ENCODE measurements at regions of chr6 and their contacts with region 1.

Region 1: GRCh38 chr6:82363351-82364086 is at the start of gene TPBG:
- DNase-seq: peak; percentile 62
- ATAC-seq: peak; percentile 84
- H3K4me3 ChIP-seq: peak within 1 kb of the TSS; percentile 92 to 97
- H3K27ac ChIP-seq: peak within 1 kb of the TSS; percentile 93
- H3K4me1 ChIP-seq: peaks cover 20% of the 10 kb centered on the region
- H3K27me3 ChIP-seq: peaks cover 2% of the 10 kb centered on the region; the same call in 1 of the 2 replicates
- CTCF ChIP-seq: peak; percentile 20; the same call in 1 of the 2 replicates
- total RNA-seq, gene TPBG: 84.1 TPM

Region 2: GRCh38 chr6:81722506-81723223 is 640.9 kb before region 1 on chr6:
- CTCF ChIA-PET with region 1: no interaction called
- POLR2A ChIA-PET with region 1: no interaction called
- in situ Hi-C with region 1: no loop called
- intact Hi-C with region 1: no loop called
- DNase-seq: no peak
- ATAC-seq: no peak
- H3K4me3 ChIP-seq: no peak overlapping the region
- H3K27ac ChIP-seq: no peak overlapping the region
- H3K4me1 ChIP-seq: no peaks in the 10 kb centered on the region
- H3K27me3 ChIP-seq: no peaks in the 10 kb centered on the region
- CTCF ChIP-seq: no peak

Region 3: GRCh38 chr6:82247634-82248232 is 115.8 kb before region 1 on chr6 and contains the start of gene IBTK:
- CTCF ChIA-PET with region 1: interaction called, 12 read pairs
- POLR2A ChIA-PET with region 1: no interaction called
- in situ Hi-C with region 1: no loop called
- intact Hi-C with region 1: loop called (anchors 5 kb)
- DNase-seq: peak; percentile 85
- ATAC-seq: peak; percentile 92
- H3K4me3 ChIP-seq: peak within 1 kb of the TSS; percentile 65 to 99
- H3K27ac ChIP-seq: peak within 1 kb of the TSS; percentile 99
- H3K4me1 ChIP-seq: peaks cover 34% of the 10 kb centered on the region; the same call in 1 of the 2 replicates
- H3K27me3 ChIP-seq: no peaks in the 10 kb centered on the region
- CTCF ChIP-seq: no peak
- total RNA-seq, gene IBTK: 73.2 TPM

Region 4: GRCh38 chr6:82270881-82271645 is 92.5 kb before region 1 on chr6:
- CTCF ChIA-PET with region 1: interaction called, 9 read pairs
- POLR2A ChIA-PET with region 1: no interaction called
- in situ Hi-C with region 1: no loop called
- intact Hi-C with region 1: loop called (anchors 5 kb)
- DNase-seq: no peak
- ATAC-seq: no peak; the same call in 1 of the 2 replicates
- H3K4me3 ChIP-seq: no peak overlapping the region
- H3K27ac ChIP-seq: no peak overlapping the region
- H3K4me1 ChIP-seq: no peaks in the 10 kb centered on the region
- H3K27me3 ChIP-seq: no peaks in the 10 kb centered on the region
- CTCF ChIP-seq: peak; percentile 64; the same call in 1 of the 2 replicates

Region 5: GRCh38 chr6:82589509-82590206 is 226.1 kb after region 1 on chr6:
- CTCF ChIA-PET with region 1: no interaction called
- POLR2A ChIA-PET with region 1: no interaction called
- in situ Hi-C with region 1: no loop called
- intact Hi-C with region 1: loop called (anchors 10 kb)
- DNase-seq: no peak
- ATAC-seq: peak; percentile 78
- H3K4me3 ChIP-seq: no peak overlapping the region
- H3K27ac ChIP-seq: no peak overlapping the region
- H3K4me1 ChIP-seq: no peaks in the 10 kb centered on the region
- H3K27me3 ChIP-seq: no peaks in the 10 kb centered on the region
- CTCF ChIP-seq: peak; percentile 39; the same call in 1 of the 2 replicates

Region 6: DNA sequence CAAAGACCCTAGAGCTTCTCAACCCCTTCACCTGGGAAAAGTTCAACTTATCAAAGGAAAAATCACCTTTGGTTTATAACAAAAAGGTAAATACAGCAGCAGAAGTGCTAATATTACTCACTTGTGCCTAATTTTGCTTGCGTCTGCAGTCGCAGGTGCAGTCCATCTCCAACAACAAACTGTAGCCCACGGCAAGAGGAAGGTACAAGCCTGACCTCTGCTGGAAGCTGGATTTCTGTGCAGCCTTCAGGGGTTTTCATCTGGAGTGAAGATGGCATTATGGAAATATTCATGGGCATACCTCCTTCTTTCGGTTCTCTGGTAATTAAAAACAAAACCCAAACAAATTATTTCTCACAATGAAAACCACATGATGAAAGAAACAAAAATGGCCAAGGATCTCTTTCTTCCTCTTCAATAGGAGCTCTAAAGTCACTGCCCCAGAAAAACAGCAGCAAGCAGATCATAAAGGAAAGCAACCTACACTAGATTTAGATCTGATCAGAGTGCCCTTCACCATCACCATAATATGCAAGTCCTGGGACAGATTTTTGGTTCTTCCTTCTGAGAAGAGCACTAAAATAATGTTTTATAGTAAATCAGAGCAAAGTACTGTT is 694.3 kb after region 1 on chr6:
- CTCF ChIA-PET with region 1: interaction called, 6 read pairs
- POLR2A ChIA-PET with region 1: no interaction called
- in situ Hi-C with region 1: no loop called
- intact Hi-C with region 1: loop called (anchors 10 kb)
- DNase-seq: no peak
- ATAC-seq: peak; percentile 87
- H3K4me3 ChIP-seq: no peak overlapping the region
- H3K27ac ChIP-seq: no peak overlapping the region
- H3K4me1 ChIP-seq: peaks cover 3% of the 10 kb centered on the region; the same call in 1 of the 2 replicates
- H3K27me3 ChIP-seq: no peaks in the 10 kb centered on the region
- CTCF ChIP-seq: peak; percentile 87

Measured in Panc1 (cell line).